ENCODE measurements at regions of chr9 and their contacts with region 1.

Region 1: GRCh38 chr9:87792831-87793288 is 66.9 kb downstream of the CTSL start:
- H3K4me3 Mint-ChIP-seq: peak overlapping the region; percentile 49
- H3K27ac Mint-ChIP-seq: peak overlapping the region; percentile 86
- H3K4me1 Mint-ChIP-seq: peaks cover 64% of the 10 kb centered on the region
- H3K27me3 Mint-ChIP-seq: no peaks in the 10 kb centered on the region

Region 2: DNA sequence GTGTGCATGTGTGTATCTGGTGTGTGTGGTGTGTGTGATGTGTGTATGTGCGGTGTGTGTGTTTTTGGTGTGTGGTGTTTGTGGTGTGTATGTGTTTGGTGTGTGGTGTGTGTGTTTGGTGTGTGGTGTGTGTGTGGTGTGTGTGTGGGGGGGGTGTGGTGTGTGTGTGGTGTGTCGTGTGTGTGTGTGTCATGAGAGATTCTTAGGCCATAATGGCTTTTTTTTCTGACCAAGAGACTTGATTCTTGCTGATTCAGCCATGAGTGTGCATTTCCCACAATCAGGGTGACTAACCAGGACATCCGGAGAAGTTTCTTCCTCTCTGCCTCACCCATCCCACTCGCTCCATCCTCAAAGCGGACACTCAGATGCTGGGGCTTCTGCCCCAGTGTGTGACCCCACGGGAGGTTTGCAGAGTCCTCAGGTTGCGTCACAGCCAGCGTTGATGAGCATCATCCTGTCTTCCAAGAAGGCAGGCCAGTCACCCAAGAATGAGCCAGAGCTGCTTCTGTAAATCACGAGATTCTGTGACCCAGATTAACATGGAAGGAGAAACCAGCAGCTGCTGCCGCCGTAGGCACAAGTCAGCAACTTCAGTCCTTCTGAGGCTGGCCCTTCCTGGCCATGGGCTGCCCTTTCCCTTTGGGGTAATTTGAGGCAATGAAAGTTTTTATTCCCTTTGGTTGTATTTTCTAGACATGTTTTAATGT is 79.4 kb before region 1 on chr9:
- intact Hi-C with region 1: loop called (anchors 1 kb)
- H3K4me3 Mint-ChIP-seq: peak overlapping the region; percentile 64
- H3K27ac Mint-ChIP-seq: peak overlapping the region; percentile 91
- H3K4me1 Mint-ChIP-seq: peaks cover 68% of the 10 kb centered on the region
- H3K27me3 Mint-ChIP-seq: peaks cover 8% of the 10 kb centered on the region

Region 3: DNA sequence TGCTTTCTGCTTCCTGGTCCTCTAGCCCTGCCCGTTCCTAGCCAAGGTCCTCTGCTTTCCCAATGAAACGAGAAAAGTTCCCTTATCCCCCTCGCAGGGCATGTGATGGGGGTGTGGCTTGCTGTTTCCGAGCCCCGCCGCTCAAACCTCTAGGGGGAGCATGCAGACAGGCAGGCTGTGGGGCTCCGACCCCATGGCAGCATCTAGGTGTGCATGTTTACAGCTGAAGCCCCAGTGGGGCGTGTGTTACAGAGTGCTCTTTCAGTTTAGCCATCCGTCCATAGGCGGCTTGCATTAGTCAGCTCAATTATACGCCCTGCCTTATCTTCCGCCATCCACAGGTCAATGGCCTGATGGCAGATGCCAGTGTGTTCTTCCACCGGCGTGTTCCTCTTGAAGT is 41.5 kb after region 1 on chr9:
- intact Hi-C with region 1: no loop called
- H3K4me3 Mint-ChIP-seq: no peak overlapping the region
- H3K27ac Mint-ChIP-seq: no peak overlapping the region
- H3K4me1 Mint-ChIP-seq: no peaks in the 10 kb centered on the region
- H3K27me3 Mint-ChIP-seq: peaks cover 83% of the 10 kb centered on the region

Measured in dendritic cell treated with granulocyte-macrophage colony-stimulating factor and Interleukin-4, amounts not matched to agents 40 ng/mL and 50 ng/mL, for 4 days (primary cell).